ENCODE measurements at regions of chr17 and their contacts with region 1.

Region 1: DNA sequence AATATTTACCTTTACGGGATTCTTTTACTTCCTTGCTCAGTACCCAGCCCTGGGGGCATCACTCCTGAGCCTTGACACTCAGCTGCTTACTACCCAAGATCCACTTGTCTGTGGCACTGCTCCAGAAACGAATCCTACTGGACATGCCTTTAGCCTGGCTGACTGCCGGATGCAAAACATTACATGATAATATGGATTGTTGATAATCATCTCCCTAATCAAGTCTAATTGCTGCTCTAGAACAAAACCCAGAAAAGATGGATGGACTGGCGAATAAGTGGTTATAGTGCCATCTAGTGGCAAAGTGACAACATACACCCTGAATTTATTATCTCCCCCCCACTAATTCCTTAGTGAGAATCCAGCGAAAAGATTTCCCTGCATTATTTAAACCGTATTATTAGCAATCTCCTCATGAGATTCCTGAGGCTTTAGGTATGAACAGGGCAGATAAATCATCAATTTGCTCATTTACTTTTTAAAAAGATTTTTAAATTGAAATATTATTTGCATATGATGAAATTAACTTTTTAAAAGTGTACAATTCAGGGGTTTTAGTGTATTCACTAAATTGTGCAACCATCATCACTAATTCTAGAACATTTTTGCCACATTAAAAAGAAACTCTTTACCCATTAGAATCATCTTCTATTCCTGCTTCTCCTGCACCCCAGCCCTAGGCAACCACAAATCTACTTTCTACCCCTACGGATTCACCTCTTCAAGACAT is 61.6 kb downstream of the RGS9 start:
- DNase-seq: peak in 1 of 5 donors; percentile 25
- H3K4me3 ChIP-seq: no peak overlapping the region
- H3K27ac ChIP-seq: no peak overlapping the region
- H3K4me1 ChIP-seq: no peaks in the 10 kb centered on the region
- H3K27me3 ChIP-seq: no peaks in the 10 kb centered on the region
- CTCF ChIP-seq: peak; percentile 66 to 77 (median 69)
- EP300 ChIP-seq: no peak
- POLR2A ChIP-seq: no peak

Region 2: DNA sequence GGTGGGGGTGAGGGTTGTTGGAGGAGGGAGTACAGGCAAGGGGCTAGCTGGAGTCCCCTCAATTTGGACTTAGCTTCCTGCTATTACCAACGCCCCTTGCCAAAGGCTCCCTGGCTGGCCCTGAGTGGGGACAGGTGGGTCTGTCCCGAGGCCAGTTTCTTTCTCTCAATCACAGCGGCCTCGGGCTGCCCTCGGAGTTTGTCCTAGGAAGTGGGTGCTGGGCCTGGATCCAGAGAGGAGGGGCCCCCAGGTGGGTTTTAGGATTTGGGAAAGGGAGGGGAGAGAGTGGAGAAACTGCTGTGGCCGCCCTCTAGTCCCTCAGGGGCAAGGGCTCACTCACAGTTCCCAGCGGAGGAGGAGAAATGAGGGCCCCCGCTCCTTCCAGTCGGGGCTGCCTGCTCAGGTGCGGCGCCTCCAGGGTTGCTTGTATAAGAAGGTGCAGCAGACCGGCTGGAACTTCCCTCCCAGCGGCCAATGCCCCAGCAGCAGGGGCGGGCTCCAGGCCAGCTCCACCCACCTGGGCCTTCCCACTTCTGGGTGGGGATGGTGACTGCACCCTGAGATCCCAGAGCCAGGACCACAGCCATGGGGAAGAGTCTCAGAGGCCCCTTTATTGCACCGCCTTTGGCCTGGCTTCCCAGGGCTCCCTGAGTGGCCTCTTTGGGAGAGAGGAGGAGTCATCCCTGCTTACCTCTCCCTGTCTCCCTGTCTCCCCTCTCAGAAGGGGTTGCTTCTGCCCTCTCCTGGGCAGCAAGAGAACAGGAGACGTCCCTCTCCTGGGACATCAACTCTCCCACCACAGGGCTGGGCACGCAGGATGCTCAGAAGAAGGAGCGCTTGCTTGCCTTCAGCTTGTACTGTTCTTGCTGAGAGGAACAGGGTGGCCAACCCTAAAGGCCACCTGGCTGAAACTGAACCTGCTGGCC is 424.7 kb before region 1 on chr17:
- intact Hi-C with region 1: loop called in 1 of 4 experiments (anchors 10 kb)
- DNase-seq: peak in 1 of 5 donors; percentile 19
- H3K4me3 ChIP-seq: no peak overlapping the region
- H3K27ac ChIP-seq: no peak overlapping the region
- H3K4me1 ChIP-seq: peaks cover 5% of the 10 kb centered on the region
- H3K27me3 ChIP-seq: peaks cover 3% of the 10 kb centered on the region
- CTCF ChIP-seq: no peak
- EP300 ChIP-seq: no peak
- POLR2A ChIP-seq: no peak

Region 3: DNA sequence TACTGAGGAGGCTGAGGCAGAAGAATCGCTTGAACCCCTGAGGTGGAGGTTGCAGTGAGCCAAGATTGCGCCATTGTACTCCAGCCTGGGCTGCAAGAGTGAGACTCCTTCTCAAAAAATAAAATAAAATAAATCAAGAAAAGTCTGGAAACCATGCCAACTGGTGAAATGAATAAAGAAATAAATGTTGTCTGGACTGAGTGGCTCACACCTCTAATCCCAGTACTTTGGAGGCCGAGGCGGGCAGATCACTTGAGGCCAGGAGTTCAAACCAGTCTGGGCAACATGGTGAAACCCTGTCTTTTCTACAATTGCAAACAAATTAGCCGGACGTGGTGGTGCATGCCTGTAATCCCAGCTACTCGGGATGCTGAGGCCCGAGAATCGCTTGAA is 278.8 kb before region 1 on chr17:
- intact Hi-C with region 1: loop called in 1 of 4 experiments (anchors 10 kb)
- DNase-seq: peak in 3 of 5 donors; percentile 36 to 49 (median 46)
- H3K4me3 ChIP-seq: peak overlapping the region; percentile 91
- H3K27ac ChIP-seq: peak overlapping the region; percentile 9 to 77
- H3K4me1 ChIP-seq: no peaks in the 10 kb centered on the region
- H3K27me3 ChIP-seq: no peaks in the 10 kb centered on the region
- CTCF ChIP-seq: no peak
- EP300 ChIP-seq: no peak
- POLR2A ChIP-seq: no peak

Region 4: DNA sequence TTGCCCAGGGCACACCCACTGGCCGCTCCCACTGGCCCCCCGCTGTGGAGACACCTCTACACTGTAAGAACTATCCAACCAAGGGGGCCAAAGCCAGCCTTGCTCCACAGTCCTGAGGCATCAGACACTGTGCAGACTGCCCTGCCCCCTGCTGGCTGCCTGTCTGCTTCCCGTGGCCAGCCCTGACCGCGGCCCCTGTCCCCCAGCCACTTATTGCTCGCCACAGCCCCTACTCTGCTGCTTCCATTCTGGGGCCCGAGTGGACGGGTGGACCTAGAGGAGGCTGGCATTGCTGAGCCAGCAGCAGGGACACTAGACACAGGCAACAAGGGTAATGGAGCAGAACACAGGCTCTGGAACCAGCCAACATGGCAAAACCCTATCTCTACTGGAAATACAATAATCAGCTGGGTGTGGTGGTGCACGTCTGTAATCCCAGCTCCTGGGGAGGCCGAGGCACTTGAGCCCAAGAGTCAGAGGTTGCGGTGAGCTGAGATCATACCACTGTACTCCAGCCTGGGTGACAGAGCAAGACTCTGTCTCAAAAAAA is 259.8 kb before region 1 on chr17:
- intact Hi-C with region 1: loop called in 1 of 4 experiments (anchors 10 kb)
- DNase-seq: no peak
- H3K4me3 ChIP-seq: no peak overlapping the region
- H3K27ac ChIP-seq: no peak overlapping the region
- H3K4me1 ChIP-seq: no peaks in the 10 kb centered on the region
- H3K27me3 ChIP-seq: no peaks in the 10 kb centered on the region
- CTCF ChIP-seq: no peak
- EP300 ChIP-seq: no peak
- POLR2A ChIP-seq: no peak

Region 5: DNA sequence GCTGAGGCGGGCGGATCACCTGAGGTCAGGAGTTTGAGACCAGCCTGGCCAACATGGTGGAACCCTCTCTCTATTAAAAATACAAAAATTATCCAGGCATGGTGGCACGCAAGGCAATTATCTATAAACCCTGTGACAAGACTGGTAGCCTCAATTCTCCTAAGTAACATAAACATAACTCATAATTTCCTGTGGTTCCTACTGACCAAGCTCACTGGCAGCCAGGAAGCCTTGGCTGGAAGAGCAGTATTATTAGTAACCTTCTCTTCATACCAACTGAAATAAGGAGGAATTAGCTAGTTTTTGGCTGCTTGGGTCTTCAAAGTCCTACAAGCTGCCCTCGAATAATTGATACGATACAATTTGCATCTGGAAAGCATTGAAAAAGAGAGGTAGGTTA is 247.9 kb before region 1 on chr17:
- intact Hi-C with region 1: loop called in 1 of 4 experiments (anchors 10 kb)
- DNase-seq: no peak
- H3K4me3 ChIP-seq: no peak overlapping the region
- H3K27ac ChIP-seq: no peak overlapping the region
- H3K4me1 ChIP-seq: no peaks in the 10 kb centered on the region
- H3K27me3 ChIP-seq: no peaks in the 10 kb centered on the region
- CTCF ChIP-seq: no peak
- EP300 ChIP-seq: no peak
- POLR2A ChIP-seq: no peak

Region 6: GRCh38 chr17:64968652-64969501 is 229.9 kb before region 1 on chr17:
- intact Hi-C with region 1: loop called in 1 of 4 experiments (anchors 10 kb)
- DNase-seq: no peak
- H3K4me3 ChIP-seq: no peak overlapping the region
- H3K27ac ChIP-seq: no peak overlapping the region
- H3K4me1 ChIP-seq: no peaks in the 10 kb centered on the region
- H3K27me3 ChIP-seq: no peaks in the 10 kb centered on the region
- CTCF ChIP-seq: no peak
- EP300 ChIP-seq: no peak
- POLR2A ChIP-seq: no peak

Region 7: GRCh38 chr17:65013613-65014391 is 185.0 kb before region 1 on chr17:
- intact Hi-C with region 1: no loop called
- DNase-seq: peak in 2 of 5 donors; percentile 25 to 51
- H3K4me3 ChIP-seq: no peak overlapping the region
- H3K27ac ChIP-seq: no peak overlapping the region
- H3K4me1 ChIP-seq: peaks cover 12% of the 10 kb centered on the region
- H3K27me3 ChIP-seq: no peaks in the 10 kb centered on the region
- CTCF ChIP-seq: no peak
- EP300 ChIP-seq: no peak
- POLR2A ChIP-seq: no peak